ENCODE measurements at regions of chr16 and their contacts with region 1.

Region 1: GRCh38 chr16:48164907-48165726 is 9.3 kb upstream of the ABCC12 start:
- DNase-seq: peak; percentile 77
- ATAC-seq: peak; percentile 93
- H3K4me3 ChIP-seq: peak overlapping the region; percentile 49; the same call in 1 of the 2 replicates
- H3K27ac ChIP-seq: peak overlapping the region; percentile 40
- H3K4me1 ChIP-seq: peaks cover 13% of the 10 kb centered on the region
- H3K27me3 ChIP-seq: no peaks in the 10 kb centered on the region
- CTCF ChIP-seq: peak; percentile 85

Region 2: GRCh38 chr16:46947900-46948547 is 1217.1 kb before region 1 on chr16:
- CTCF ChIA-PET with region 1: no interaction called
- POLR2A ChIA-PET with region 1: no interaction called
- intact Hi-C with region 1: loop called (anchors 5 kb)
- DNase-seq: peak; percentile 53
- ATAC-seq: peak; percentile 69
- H3K4me3 ChIP-seq: no peak overlapping the region
- H3K27ac ChIP-seq: no peak overlapping the region
- H3K4me1 ChIP-seq: no peaks in the 10 kb centered on the region
- H3K27me3 ChIP-seq: no peaks in the 10 kb centered on the region
- CTCF ChIP-seq: peak; percentile 61

Region 3: DNA sequence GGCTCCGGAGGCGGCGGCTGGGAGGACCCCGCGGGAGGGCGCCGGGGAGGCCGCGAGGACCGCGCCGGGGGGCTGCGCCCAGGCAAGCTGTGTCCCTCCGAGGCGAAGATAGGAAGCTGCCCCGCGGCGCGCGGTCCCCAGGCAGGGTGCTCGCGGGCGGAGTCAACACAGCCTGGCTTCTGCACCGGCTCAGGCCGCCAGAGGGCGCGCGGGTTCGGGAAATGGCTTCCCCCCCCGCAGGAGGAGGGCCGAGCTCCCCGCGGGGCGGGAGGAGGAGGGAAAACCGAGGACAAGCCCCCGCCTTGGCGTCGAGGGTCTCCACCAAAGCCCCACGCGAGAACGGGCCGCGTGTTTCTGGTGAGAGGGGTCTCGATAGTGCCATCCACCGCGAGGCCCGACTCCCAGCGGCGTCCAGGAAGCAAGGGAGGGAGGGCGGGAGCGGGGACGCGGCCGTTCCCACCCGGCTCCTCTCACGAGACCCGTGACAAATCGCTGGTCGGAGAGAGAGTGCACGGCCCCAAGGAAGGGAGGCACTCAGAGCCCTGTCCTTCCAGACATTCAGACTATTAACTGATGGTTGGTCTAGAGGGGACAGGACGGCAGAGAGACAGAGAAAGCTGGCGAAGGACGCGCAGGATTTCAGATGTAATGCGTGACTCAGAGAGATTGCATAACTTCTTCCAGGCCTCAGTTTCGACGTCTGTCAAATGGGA is 1127.2 kb before region 1 on chr16:
- CTCF ChIA-PET with region 1: interaction called, 3 read pairs
- POLR2A ChIA-PET with region 1: no interaction called
- intact Hi-C with region 1: loop called (anchors 2 kb)
- DNase-seq: peak; percentile 75
- ATAC-seq: peak; percentile 96
- H3K4me3 ChIP-seq: peak overlapping the region; percentile 73
- H3K27ac ChIP-seq: no peak overlapping the region
- H3K4me1 ChIP-seq: no peaks in the 10 kb centered on the region
- H3K27me3 ChIP-seq: no peaks in the 10 kb centered on the region
- CTCF ChIP-seq: peak; percentile 73

Region 4: DNA sequence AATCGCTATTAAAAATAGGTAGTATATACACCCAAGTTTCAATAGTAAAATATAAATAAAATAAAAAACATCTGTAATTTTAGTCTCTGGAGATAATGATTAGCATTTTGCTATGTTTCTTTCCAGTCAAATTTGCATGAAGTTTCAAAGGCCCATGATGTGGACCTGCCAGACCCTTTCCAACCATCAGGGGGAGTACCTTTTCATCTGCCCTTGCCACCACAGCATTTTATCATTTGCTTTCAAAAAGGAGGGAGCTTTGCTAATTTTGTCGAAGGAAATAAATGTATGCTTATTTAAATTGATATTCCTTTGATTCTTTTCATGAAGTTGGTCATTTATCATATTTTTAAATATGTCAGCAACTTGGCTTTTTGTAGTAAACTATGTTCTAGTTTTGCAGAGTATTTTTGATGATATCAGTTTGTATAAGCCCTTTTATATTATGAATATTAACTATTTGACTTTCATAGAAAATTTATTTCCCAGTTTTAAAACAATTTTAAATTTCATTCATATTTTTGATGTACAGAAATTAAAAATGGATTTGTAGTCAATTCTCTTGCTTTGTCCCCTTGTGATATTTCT is 906.1 kb before region 1 on chr16:
- CTCF ChIA-PET with region 1: interaction called, 3 read pairs
- POLR2A ChIA-PET with region 1: no interaction called
- intact Hi-C with region 1: loop called (anchors 5 kb)
- DNase-seq: peak; percentile 46
- ATAC-seq: no peak; the same call in 1 of the 2 replicates
- H3K4me3 ChIP-seq: no peak overlapping the region
- H3K27ac ChIP-seq: no peak overlapping the region
- H3K4me1 ChIP-seq: no peaks in the 10 kb centered on the region
- H3K27me3 ChIP-seq: no peaks in the 10 kb centered on the region
- CTCF ChIP-seq: peak; percentile 65

Region 5: GRCh38 chr16:47774661-47775060 is 390.5 kb before region 1 on chr16:
- CTCF ChIA-PET with region 1: no interaction called
- POLR2A ChIA-PET with region 1: no interaction called
- intact Hi-C with region 1: loop called (anchors 10 kb)
- DNase-seq: peak; percentile 78
- ATAC-seq: peak; percentile 50
- H3K4me3 ChIP-seq: no peak overlapping the region
- H3K27ac ChIP-seq: no peak overlapping the region
- H3K4me1 ChIP-seq: peaks cover 37% of the 10 kb centered on the region
- H3K27me3 ChIP-seq: no peaks in the 10 kb centered on the region
- CTCF ChIP-seq: no peak; the same call in 1 of the 2 replicates

Region 6: DNA sequence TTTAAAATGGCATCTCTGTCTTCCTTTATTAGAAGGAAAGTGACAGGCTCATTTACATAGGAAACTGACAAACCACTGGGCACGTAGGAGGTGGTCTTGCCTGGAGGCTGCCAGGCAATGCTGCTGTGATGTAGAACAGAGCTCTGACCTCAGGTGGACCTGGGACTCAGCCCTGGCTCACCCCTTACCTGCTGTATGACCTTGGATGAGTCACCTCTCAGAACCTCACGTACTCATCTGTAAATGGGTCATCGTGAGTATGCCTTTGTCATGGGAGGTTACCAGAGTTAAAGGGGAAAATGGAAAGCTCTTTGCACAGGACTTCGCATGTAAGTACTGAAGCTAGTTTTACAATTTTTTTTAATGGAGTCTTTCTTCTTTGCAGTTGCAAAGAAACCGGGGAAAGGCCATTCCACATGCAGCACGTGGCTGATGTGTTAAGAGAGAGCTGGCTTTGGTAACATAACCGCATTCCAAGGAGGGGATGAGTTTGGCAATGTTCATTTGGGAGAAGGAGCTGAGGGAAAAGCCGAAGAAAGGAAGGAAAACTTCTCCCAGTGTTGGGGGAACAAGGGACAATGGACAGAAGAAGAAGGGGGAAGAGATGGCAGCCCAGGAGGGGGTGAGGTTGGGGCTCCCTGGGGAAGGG is 41.6 kb after region 1 on chr16:
- CTCF ChIA-PET with region 1: no interaction called
- POLR2A ChIA-PET with region 1: no interaction called
- intact Hi-C with region 1: no loop called
- DNase-seq: peak; percentile 7
- ATAC-seq: no peak
- H3K4me3 ChIP-seq: no peak overlapping the region
- H3K27ac ChIP-seq: no peak overlapping the region
- H3K4me1 ChIP-seq: no peaks in the 10 kb centered on the region
- H3K27me3 ChIP-seq: no peaks in the 10 kb centered on the region
- CTCF ChIP-seq: no peak